Common myeloid progenitor, CD34-positive (primary cell): ENCODE measurements at regions of chr1 and their contacts with region 1.

Region 1: DNA sequence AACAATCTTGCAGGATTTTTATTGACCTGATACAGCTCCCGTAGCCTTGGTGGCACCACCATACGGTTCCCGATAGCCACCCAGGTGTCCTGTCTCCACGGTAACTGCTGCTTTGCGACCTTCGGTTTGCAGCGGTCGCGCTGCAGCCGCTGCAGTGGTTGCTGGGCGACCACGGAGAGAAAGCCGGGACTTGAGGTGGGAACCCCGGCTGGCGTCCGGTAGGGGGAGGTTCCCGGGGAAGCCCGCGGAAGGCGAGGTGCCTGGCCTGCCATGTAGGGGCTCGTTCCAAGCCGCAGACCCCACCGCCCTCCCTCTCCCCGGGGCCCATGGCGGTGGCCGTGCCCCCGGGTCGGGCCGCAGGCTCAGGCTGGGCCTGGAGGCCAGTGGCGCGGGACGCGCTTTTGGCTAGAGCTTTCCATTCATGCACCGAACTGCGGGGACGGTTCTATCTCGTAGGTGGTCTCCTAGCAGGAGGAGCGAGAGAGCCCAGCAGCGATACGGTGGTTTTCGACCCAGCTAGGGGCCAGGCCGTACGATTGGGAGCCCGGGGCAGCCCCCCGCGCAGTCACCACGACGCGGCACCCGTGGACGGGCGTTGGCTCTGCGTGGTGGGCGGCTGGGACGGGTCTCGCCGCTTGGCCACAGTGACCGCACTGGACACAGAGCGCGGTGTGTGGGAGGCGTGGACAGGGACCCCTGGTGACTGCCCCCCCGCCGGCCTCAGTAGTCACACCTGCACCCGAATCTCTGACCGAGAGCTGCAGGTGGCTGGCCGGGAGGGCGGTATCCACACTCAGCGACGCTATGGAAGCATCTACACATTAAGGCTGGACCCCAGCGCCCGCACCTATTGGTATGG is at the start of gene KLHDC9:
- DNase-seq: peak; percentile 86 to 89 (median 86)
- H3K4me3 ChIP-seq: peak within 1 kb of the TSS; percentile 59 to 91 (median 74)
- H3K27ac ChIP-seq: peak within 1 kb of the TSS in 1 of 2 experiments; percentile 50
- H3K4me1 ChIP-seq: peaks cover 0 to 20% (median 20%) of the 10 kb centered on the region in 4 experiments
- H3K27me3 ChIP-seq: no peaks in the 10 kb centered on the region

Region 2: GRCh38 chr1:160877221-160877620 is 221.2 kb before region 1 on chr1:
- CTCF ChIA-PET with region 1: no interaction called
- POLR2A ChIA-PET with region 1: no interaction called
- DNase-seq: peak; percentile 66 to 78 (median 76)
- H3K4me3 ChIP-seq: no peak overlapping the region
- H3K27ac ChIP-seq: no peak overlapping the region
- H3K4me1 ChIP-seq: peaks cover 0 to 11% (median 7%) of the 10 kb centered on the region in 4 experiments
- H3K27me3 ChIP-seq: no peaks in the 10 kb centered on the region

Region 3: GRCh38 chr1:161038523-161039153 is 59.8 kb before region 1 on chr1 and contains the start of gene TSTD1:
- CTCF ChIA-PET with region 1: interaction called, 46 read pairs
- POLR2A ChIA-PET with region 1: interaction called, 3 read pairs
- DNase-seq: peak; percentile 81 to 96 (median 92)
- H3K4me3 ChIP-seq: peak within 1 kb of the TSS; percentile 60 to 91 (median 75)
- H3K27ac ChIP-seq: peak within 1 kb of the TSS; percentile 25 to 77
- H3K4me1 ChIP-seq: peaks cover 0 to 24% (median 19%) of the 10 kb centered on the region in 4 experiments
- H3K27me3 ChIP-seq: no peaks in the 10 kb centered on the region

Region 4: DNA sequence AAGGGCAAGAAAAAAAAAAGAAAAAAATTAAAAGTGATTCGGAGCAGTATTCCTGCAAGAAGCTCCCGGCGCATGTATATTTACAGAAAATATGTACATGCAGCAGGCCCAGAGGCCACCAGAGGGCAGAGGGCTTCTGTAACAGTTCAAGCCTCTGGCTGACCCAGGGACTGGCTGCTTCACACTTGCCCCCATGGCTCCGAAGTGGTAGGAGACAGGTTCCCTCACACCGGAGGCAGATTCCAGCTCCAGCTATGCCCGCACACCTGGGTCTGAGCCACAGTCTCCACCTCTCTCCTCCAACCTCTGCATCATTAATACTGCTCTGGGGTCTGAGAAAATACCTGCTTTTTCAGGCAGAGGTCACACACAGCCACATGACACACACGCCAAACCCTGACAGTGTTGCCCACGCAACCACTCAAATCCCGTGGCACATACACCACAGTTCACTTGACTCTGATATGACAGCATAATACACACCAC is 26.5 kb before region 1 on chr1:
- CTCF ChIA-PET with region 1: interaction called, 297 read pairs
- POLR2A ChIA-PET with region 1: interaction called, 30 read pairs
- DNase-seq: peak; percentile 71 to 75 (median 74)
- H3K4me3 ChIP-seq: no peak overlapping the region
- H3K27ac ChIP-seq: no peak overlapping the region
- H3K4me1 ChIP-seq: peaks cover 12 to 67% (median 50%) of the 10 kb centered on the region in 4 experiments
- H3K27me3 ChIP-seq: no peaks in the 10 kb centered on the region

Region 5: GRCh38 chr1:161132410-161133219 is 34.2 kb after region 1 on chr1 and contains the start of gene DEDD:
- CTCF ChIA-PET with region 1: interaction called, 118 read pairs
- POLR2A ChIA-PET with region 1: no interaction called
- DNase-seq: peak; percentile 97 to 98 (median 97)
- H3K4me3 ChIP-seq: peak within 1 kb of the TSS; percentile 82 to 97 (median 95)
- H3K27ac ChIP-seq: peak within 1 kb of the TSS; percentile 85 to 92
- H3K4me1 ChIP-seq: peaks cover 10 to 29% (median 21%) of the 10 kb centered on the region in 4 experiments
- H3K27me3 ChIP-seq: no peaks in the 10 kb centered on the region

Region 6: GRCh38 chr1:161165742-161166668 is 67.6 kb after region 1 on chr1 and contains the start of gene PPOX:
- CTCF ChIA-PET with region 1: interaction called, 11 read pairs
- POLR2A ChIA-PET with region 1: no interaction called
- DNase-seq: peak; percentile 97 to 99 (median 99)
- H3K4me3 ChIP-seq: peak within 1 kb of the TSS; percentile 53 to 91 (median 77)
- H3K27ac ChIP-seq: peak within 1 kb of the TSS; percentile 97 to 98
- H3K4me1 ChIP-seq: peaks cover 3 to 29% (median 24%) of the 10 kb centered on the region in 4 experiments
- H3K27me3 ChIP-seq: no peaks in the 10 kb centered on the region

Region 7: DNA sequence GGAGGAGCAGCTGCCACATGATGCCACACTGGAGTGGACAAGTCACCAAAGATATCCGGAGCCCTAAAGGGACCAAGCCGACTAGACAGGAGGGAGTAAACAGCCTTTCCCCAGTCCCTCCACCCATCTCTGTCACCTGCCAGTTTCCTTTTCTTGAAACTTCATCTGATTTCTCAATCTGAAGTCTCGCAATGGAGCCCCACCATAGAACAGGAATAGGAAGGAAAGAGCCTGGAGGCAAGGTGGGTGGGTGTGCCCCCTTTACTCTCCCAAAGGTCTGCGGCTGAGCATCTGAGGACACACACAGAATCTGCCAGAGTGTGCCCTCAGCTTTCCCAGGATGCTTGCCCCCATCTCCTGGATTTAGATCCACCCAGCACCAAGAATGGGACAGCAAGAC is 532.6 kb after region 1 on chr1 and contains the start of gene FCGR3B:
- CTCF ChIA-PET with region 1: no interaction called
- POLR2A ChIA-PET with region 1: no interaction called
- DNase-seq: no peak
- H3K4me3 ChIP-seq: peak within 1 kb of the TSS in 1 of 7 experiments; percentile 15
- H3K27ac ChIP-seq: no peak within 1 kb of the TSS
- H3K4me1 ChIP-seq: peaks cover 0 to 2% (median under 1%) of the 10 kb centered on the region in 4 experiments
- H3K27me3 ChIP-seq: peaks cover 0 to 5% (median 0%) of the 10 kb centered on the region in 5 experiments